Activated B cell treated with CpG ODN at 0.5 μM for 24 hours (primary cell): ENCODE measurements at regions of chr10 and their contacts with region 1.

Region 1: DNA sequence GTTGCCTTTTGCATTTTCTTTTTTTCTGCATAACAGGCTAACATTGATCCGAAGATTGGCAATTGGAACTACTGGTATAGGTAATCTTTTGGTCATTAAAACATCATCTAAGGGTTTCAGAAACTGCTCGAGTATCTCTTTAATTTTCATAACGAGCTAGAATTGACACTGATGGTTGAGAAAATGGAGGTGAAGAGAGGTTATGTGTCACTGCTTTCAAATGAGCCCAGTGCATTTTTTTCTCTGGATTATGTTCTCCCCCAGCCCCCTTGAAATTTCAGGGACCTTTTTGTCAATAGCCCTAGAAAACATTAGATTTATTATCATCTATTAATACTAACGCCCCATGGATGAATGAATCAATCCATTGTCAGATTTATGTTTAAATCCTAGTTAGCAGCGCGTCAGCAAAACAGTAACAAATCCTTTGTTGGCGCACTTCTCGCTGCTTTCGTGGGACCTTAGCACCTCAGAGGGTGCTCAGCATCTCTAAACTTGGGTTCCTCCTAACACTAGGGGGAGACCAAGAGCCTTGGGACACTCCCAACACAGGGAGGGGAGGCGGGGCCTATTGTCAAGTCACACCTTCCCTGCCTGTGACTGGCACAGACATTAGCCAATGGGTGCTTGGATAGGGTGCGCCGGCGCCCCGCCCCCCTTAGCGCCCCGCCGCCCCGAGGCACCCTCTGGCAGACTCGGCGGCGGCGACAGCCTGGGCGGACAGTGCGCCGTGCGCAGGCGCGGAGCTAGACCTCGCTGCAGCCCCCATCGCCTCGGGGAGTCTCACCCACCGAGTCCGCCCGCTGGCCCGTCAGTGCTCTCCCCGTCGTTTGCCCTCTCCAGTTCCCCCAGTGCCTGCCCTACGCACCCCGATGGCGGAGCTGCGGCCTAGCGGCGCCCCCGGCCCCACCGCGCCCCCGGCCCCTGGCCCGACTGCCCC is at the start of gene SUFU:
- DNase-seq: peak; percentile 88
- ATAC-seq: peak; percentile 74
- H3K4me3 Mint-ChIP-seq: no peak within 1 kb of the TSS
- H3K27ac Mint-ChIP-seq: peak within 1 kb of the TSS; percentile 68
- H3K4me1 Mint-ChIP-seq: peaks cover 23% of the 10 kb centered on the region
- H3K27me3 Mint-ChIP-seq: no peaks in the 10 kb centered on the region
- CTCF ChIP-seq: no peak
- total RNA-seq, gene SUFU: 5.7 and 7.4 TPM in 2 replicates

Region 2: DNA sequence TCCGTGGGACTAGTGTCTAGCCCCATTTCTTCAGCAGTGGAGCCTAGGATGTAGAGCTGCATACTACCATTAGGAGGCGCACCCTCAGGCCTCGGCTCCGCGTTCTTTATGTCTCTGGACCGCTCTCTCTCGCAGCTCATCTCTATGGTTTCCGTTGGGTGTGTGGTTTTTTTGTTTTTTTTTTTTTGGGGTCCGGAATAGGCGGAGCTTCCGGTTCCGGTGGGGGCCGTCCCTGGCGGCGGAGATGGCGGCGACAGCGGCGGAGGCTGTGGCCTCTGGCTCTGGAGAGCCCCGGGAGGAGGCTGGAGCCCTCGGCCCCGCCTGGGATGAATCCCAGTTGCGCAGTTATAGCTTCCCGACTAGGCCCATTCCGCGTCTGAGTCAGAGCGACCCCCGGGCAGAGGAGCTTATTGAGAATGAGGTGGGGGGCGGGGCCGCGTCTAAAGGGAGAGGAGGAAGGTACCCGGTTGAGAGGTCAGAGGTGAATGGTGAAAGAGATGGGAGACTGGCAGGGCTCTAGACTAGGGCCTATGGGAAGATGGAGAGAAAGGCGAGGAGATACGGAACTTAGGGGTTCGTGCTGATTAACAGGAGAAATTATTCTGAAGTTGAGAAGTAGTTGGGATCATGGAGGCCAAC is 1967.7 kb before region 1 on chr10 and contains the start of gene HIF1AN:
- CTCF ChIA-PET with region 1: no interaction called
- POLR2A ChIA-PET with region 1: no interaction called
- intact Hi-C with region 1: loop called (anchors 10 kb)
- DNase-seq: peak; percentile 79
- ATAC-seq: peak; percentile 100
- H3K4me3 Mint-ChIP-seq: no peak within 1 kb of the TSS
- H3K27ac Mint-ChIP-seq: no peak within 1 kb of the TSS
- H3K4me1 Mint-ChIP-seq: peaks cover 14% of the 10 kb centered on the region
- H3K27me3 Mint-ChIP-seq: no peaks in the 10 kb centered on the region
- CTCF ChIP-seq: peak; percentile 3
- total RNA-seq, gene HIF1AN: 55.8 and 59.9 TPM in 2 replicates

Region 3: DNA sequence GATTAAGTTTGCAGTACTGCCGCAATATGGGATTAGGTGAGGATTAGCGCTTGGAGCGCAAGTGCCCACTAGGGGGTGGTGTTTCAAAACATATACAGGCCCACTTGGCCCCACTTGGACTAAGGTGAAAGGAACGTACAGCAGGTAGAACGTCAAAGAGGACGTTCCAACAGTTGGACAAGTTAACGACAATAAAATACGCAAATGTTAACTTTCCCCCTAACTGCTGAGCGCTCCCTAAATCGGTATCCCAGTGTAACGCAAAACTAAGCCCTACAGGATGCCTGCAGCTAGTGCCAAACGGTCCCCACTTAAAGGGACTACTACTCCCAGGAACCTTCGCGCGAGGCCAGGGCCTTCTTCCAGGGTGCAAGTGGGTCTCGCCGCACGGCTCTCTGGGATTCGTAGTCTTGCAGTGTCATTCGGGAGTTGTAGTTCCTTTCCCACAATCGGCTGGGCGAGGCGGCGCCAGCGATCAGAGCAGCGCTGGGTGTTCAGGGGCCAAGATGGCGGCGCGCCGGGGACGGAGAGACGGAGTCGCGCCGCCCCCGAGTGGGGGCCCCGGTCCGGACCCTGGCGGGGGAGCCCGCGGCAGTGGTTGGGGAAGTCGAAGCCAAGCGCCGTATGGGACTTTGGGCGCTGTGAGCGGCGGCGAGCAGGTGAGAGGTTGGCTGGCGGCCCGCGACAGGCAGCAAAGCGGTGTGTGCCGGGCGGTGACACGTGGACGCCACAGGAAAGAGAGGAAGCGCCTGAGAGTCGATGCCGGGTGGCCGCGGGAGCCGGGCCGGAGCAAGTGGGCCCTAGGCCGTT is 370.8 kb before region 1 on chr10 and contains the start of gene PPRC1:
- CTCF ChIA-PET with region 1: no interaction called
- POLR2A ChIA-PET with region 1: no interaction called
- intact Hi-C with region 1: loop called (anchors 1 kb)
- DNase-seq: peak; percentile 89
- ATAC-seq: peak; percentile 93
- H3K4me3 Mint-ChIP-seq: peak within 1 kb of the TSS; percentile 99
- H3K27ac Mint-ChIP-seq: peak within 1 kb of the TSS; percentile 98
- H3K4me1 Mint-ChIP-seq: peaks cover 41% of the 10 kb centered on the region
- H3K27me3 Mint-ChIP-seq: no peaks in the 10 kb centered on the region
- CTCF ChIP-seq: peak; percentile 81
- total RNA-seq, gene PPRC1: 65.1 and 77.2 TPM in 2 replicates

Region 4: DNA sequence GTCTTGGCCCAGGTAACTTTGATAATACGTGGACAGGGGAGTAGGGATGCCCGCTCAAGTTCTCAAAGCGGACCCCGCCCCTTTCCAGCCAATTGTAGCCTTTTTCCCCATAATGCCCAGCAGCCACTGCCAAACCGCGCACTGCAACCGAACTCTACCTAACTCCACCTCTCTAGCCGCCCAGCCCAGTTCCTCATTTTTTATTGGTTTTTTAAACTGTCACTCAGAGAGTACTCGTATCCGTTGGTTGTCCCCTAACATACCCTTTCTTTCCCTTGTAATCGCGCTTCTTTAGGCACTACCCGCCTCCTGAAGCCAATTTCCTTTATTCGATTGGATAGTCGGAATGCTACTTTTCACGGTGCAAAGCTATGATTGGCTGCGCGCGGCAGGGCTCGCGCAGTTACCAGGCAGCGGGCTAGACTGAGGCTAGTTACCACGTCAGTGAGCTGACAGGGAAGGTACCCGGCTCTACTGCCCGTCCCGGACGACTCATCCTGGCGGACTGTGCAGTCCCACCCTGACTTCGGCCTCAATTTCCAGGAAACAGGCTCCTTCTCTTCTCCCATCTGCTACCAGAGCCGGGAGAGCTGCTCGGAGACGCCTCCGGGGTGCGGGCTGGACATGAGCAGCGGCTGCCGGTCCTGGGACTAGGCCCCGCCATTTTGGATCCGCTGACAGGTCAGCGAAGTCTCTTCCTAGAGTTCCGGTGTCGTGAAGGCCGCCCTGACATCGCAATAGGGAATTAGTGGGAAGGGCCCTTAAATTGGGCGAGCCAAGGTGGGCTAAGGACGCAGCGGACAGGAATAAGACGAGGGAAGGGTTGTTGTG is 258.2 kb before region 1 on chr10 and contains the start of gene GBF1:
- CTCF ChIA-PET with region 1: interaction called, 3 read pairs
- POLR2A ChIA-PET with region 1: interaction called, 4 read pairs
- intact Hi-C with region 1: loop called (anchors 1 kb)
- DNase-seq: peak; percentile 76
- ATAC-seq: peak; percentile 88
- H3K4me3 Mint-ChIP-seq: peak within 1 kb of the TSS; percentile 98
- H3K27ac Mint-ChIP-seq: peak within 1 kb of the TSS; percentile 91
- H3K4me1 Mint-ChIP-seq: peaks cover 58% of the 10 kb centered on the region
- H3K27me3 Mint-ChIP-seq: peaks cover 22% of the 10 kb centered on the region
- CTCF ChIP-seq: no peak
- total RNA-seq, gene GBF1: 40.8 and 44.3 TPM in 2 replicates

Region 5: DNA sequence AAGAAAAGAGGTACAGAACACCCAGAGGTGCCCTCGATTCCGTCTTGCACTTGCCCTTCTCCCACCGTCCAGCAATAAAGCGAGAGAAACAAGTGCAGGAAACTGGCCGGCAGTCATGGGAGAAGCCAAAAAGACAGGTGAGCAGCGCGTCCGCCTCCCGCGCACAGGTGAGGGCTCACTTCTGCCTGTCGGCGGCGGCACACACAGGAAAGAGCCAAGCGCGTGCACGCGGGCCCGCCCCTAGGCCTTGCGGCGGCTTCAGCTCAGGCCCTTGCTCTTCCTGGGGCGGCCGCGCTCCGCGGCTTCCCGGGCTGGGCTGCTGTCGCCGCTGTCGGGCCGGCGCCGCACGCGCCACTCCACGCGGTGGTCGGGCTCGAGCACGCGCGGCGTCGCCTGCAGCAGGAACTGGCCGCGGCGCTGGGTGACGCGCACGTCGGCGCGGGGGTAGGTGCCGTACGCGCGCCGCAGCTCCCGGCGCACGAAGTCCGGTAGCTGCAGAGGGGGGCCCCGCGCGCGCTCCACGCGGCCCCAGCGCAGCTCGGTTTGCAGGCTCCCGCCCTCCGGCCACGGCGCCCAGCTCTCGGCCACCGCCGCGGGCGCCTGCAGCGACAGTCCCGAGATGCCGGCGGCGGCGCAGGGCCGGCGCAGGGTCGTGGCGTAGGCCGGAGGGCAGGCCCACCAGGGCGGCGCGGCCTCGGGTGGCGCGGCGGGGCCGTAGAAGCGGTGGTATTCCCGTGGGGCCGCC is 53.2 kb before region 1 on chr10:
- CTCF ChIA-PET with region 1: no interaction called
- POLR2A ChIA-PET with region 1: interaction called, 19 read pairs
- intact Hi-C with region 1: loop called (anchors 1 kb)
- DNase-seq: peak; percentile 84
- ATAC-seq: peak; percentile 82
- H3K4me3 Mint-ChIP-seq: peak overlapping the region; percentile 92
- H3K27ac Mint-ChIP-seq: peak overlapping the region; percentile 94
- H3K4me1 Mint-ChIP-seq: peaks cover 24% of the 10 kb centered on the region
- H3K27me3 Mint-ChIP-seq: no peaks in the 10 kb centered on the region
- CTCF ChIP-seq: no peak

Region 6: GRCh38 chr10:102713814-102714620 is 210.5 kb after region 1 on chr10 and contains the start of gene ARL3:
- CTCF ChIA-PET with region 1: interaction called, 3 read pairs
- POLR2A ChIA-PET with region 1: no interaction called
- intact Hi-C with region 1: loop called (anchors 2 kb)
- DNase-seq: peak; percentile 89
- ATAC-seq: peak; percentile 85
- H3K4me3 Mint-ChIP-seq: peak within 1 kb of the TSS; percentile 95
- H3K27ac Mint-ChIP-seq: peak within 1 kb of the TSS; percentile 92
- H3K4me1 Mint-ChIP-seq: peaks cover 44% of the 10 kb centered on the region
- H3K27me3 Mint-ChIP-seq: no peaks in the 10 kb centered on the region
- CTCF ChIP-seq: no peak
- total RNA-seq, gene ARL3: 4.1 and 5.1 TPM in 2 replicates

Region 7: DNA sequence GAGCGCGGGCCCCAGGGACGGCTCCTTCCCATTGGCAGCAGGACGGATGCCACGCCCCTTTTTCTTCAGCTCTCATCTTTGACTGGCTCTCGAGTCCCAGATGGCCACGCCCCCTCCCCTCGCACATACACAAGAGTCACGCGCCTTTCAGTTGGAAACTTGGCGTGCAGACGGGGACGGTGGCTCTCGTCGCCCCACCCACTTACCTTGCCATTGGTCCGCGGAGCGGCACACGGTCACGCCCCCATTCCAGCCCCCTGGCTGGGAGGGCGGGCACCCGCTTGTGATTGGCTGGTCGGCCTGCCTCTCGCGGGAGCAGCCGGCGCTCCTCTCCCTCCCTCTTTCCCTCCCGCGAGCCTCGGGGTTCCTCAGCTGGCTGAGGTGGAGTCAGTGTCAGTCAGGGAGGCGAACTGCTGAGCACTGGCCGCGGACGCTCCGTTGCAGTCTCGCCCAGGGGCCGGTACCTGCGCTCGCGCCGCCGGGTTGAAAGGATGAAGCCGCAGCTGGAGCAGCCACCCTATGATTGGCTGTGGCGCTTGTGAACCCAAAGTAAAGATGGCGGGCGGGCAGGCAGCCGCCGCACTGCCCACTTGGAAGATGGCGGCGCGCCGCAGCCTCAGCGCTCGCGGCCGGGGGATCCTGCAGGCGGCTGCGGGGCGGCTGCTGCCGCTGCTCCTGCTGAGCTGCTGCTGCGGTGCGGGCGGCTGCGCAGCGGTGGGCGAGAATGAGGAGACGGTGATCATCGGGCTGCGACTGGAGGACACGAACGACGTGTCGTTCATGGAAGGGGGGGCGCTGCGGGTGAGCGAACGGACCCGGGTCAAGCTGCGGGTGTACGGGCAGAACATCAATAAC is 414.6 kb after region 1 on chr10 and contains the start of gene CNNM2:
- CTCF ChIA-PET with region 1: no interaction called
- POLR2A ChIA-PET with region 1: interaction called, 13 read pairs
- intact Hi-C with region 1: no loop called
- DNase-seq: peak; percentile 96
- ATAC-seq: peak; percentile 89
- H3K4me3 Mint-ChIP-seq: peak within 1 kb of the TSS; percentile 96
- H3K27ac Mint-ChIP-seq: peak within 1 kb of the TSS; percentile 93
- H3K4me1 Mint-ChIP-seq: peaks cover 45% of the 10 kb centered on the region
- H3K27me3 Mint-ChIP-seq: peaks cover 10% of the 10 kb centered on the region
- CTCF ChIP-seq: no peak
- total RNA-seq, gene CNNM2: 5.5 and 7.3 TPM in 2 replicates